ENCODE measurements at regions of chr10 and their contacts with region 1.

Region 1: DNA sequence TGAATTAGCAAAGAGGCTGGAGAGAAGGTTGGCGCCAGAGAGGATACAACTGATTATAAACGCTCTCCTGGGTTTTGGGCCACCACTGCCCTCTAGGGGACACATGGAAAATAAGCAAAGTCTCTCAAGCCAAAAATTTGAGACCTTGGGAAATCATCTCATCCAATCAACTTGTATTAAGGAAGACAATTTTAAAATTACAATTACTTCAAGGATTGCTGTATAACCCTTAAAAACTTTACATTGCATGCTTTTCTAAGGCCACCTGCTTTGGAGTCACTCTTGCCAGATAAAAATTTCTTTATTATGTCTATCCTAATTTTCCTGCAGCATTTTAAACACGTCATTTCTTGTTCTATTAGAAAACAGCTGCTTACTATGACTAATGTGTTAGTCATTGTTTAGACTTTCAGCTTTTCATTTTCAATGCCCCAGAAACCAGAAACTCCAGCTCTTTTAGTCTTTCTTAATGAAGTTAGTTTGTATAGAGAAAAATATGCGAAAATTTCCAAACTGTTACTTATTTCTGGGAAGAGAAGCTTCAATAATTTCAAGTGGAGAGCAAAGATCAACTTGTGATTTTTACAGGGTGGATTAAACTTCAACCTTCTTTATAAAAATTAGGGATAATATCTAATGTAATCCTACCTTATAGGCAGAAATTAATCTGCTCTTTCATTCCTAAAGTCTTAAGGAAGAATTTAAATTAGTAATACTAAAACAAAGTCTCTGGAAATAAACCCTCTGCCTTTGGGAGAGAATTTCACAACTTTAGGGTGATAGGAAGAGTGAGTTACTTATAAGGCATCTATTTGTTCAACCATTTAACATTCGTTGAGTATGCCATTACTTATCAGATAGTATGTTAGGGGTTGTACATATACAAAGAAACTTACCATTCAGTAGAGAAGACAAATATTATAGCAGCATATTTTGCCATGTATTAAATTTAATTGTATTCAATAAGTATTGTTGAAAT is 20.6 kb upstream of the RHOBTB1 start:
- DNase-seq: peak; percentile 83
- H3K4me3 Mint-ChIP-seq: no peak overlapping the region
- H3K27ac Mint-ChIP-seq: no peak overlapping the region
- H3K4me1 Mint-ChIP-seq: peaks cover 17% of the 10 kb centered on the region
- H3K27me3 Mint-ChIP-seq: peaks cover 20% of the 10 kb centered on the region

Region 2: GRCh38 chr10:60816628-60817397 is 147.7 kb before region 1 on chr10:
- intact Hi-C with region 1: loop called (anchors 1 kb)
- DNase-seq: peak; percentile 82
- H3K4me3 Mint-ChIP-seq: no peak overlapping the region
- H3K27ac Mint-ChIP-seq: no peak overlapping the region
- H3K4me1 Mint-ChIP-seq: peaks cover 9% of the 10 kb centered on the region
- H3K27me3 Mint-ChIP-seq: peaks cover 13% of the 10 kb centered on the region

Region 3: DNA sequence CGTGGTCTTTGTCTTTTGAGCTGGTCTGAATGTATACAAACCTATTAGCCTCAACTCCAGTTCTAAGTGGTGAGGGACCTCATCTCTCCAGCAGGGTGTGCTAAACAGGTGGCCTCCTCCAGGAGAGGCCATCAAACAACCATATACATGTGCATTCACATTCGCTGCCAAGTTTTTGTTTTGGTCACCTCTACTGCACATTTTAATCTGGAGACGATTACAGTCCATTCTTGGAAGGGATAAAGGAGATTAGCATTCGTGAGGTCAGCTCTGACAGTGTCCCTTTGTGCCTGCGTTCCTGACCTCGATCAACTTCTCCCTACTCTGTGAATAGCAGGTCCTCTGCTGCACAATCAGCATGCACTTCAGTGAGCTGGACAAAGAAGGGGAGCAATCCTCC is 81.4 kb before region 1 on chr10:
- intact Hi-C with region 1: loop called (anchors 5 kb)
- DNase-seq: peak; percentile 60
- H3K4me3 Mint-ChIP-seq: no peak overlapping the region
- H3K27ac Mint-ChIP-seq: no peak overlapping the region
- H3K4me1 Mint-ChIP-seq: no peaks in the 10 kb centered on the region
- H3K27me3 Mint-ChIP-seq: no peaks in the 10 kb centered on the region

Region 4: GRCh38 chr10:60944159-60944909 is 20.2 kb before region 1 on chr10 and contains the start of gene RHOBTB1:
- intact Hi-C with region 1: loop called (anchors 2 kb)
- DNase-seq: peak; percentile 81
- H3K4me3 Mint-ChIP-seq: peak within 1 kb of the TSS; percentile 82
- H3K27ac Mint-ChIP-seq: peak within 1 kb of the TSS; percentile 74
- H3K4me1 Mint-ChIP-seq: peaks cover 8% of the 10 kb centered on the region
- H3K27me3 Mint-ChIP-seq: peaks cover 79% of the 10 kb centered on the region
- total RNA-seq, gene RHOBTB1: 0.69 TPM in 1 of 2 replicates, not detected in the other

Region 5: GRCh38 chr10:61284222-61284890 is 319.8 kb after region 1 on chr10:
- intact Hi-C with region 1: loop called (anchors 10 kb)
- DNase-seq: peak; percentile 63
- H3K4me3 Mint-ChIP-seq: no peak overlapping the region
- H3K27ac Mint-ChIP-seq: no peak overlapping the region
- H3K4me1 Mint-ChIP-seq: peaks cover 19% of the 10 kb centered on the region
- H3K27me3 Mint-ChIP-seq: peaks cover 13% of the 10 kb centered on the region